PC-9 (cell line): ENCODE measurements at regions of chr10 and their contacts with region 1.

Region 1: DNA sequence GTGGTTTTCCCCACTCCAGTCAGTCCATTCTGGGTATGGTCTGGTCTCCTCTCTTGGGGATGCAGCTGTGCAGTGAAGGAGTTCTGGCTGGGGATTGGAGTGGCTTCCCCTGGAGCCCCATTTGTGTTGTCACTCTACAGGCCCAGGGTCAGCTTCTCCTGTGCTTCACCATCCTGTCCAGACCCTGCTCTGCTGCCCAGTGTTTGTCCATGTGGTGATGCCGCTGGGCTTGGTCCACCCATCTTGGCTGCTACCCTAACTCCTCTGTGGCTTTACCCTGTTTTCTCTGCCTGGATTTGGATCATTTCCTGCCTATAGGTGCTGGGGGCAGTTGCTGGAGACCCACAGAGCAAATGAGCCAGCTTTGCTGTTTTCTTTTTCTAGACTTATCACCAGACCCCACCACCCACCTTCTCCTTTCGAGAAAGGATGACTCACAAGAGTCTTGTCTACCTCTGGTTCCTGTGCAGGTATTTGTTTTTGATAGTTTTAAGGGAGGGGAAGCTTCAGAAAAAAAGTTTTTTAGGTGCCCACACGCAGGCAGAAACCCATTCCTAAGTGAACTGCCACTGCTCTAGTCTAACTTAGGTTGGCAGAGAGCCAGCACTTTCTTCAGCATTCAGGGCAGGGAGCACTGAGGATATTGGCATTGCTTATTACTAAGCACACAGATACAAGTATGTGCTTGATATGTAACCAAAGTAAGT is 8.5 kb downstream of the ZDHHC16 start:
- DNase-seq: no peak
- H3K4me3 ChIP-seq: no peak overlapping the region
- H3K27ac ChIP-seq: no peak overlapping the region
- H3K4me1 ChIP-seq: no peaks in the 10 kb centered on the region
- H3K27me3 ChIP-seq: no peaks in the 10 kb centered on the region
- CTCF ChIP-seq: no peak

Region 2: DNA sequence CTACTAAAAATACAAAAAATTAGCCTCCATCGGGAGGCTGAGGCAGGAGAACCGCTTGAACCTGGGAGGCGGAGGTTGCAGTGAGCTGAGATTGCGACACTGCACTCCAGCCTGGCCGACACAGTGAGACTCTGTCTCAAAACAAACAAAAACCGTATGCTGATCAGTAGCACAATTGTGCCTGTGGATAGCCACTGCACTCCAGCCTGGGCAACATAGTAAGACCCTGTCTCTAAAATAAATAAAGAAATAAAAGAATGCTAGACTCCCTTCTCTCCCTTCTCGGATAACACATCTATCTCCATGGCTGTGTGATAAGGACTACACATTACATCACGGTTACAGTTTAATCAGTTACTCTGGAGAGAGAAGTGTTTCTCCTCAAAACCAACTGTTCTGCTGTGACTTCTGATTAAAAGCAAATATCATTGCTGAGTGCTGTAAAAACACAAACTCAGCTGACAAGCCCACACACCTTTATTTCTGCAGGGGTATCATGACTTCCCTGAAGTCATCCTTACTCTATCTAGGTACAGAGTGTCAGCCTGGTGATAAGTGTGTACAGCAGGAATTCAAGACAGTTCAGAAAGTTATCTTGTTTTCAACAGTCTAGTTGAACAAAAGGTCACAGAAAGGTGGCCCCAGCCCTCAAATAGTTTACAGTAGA is 156.8 kb before region 1 on chr10:
- CTCF ChIA-PET with region 1: no interaction called
- POLR2A ChIA-PET with region 1: no interaction called
- intact Hi-C with region 1: no loop called
- DNase-seq: no peak
- H3K4me3 ChIP-seq: no peak overlapping the region
- H3K27ac ChIP-seq: no peak overlapping the region
- H3K4me1 ChIP-seq: no peaks in the 10 kb centered on the region
- H3K27me3 ChIP-seq: no peaks in the 10 kb centered on the region
- CTCF ChIP-seq: no peak

Region 3: DNA sequence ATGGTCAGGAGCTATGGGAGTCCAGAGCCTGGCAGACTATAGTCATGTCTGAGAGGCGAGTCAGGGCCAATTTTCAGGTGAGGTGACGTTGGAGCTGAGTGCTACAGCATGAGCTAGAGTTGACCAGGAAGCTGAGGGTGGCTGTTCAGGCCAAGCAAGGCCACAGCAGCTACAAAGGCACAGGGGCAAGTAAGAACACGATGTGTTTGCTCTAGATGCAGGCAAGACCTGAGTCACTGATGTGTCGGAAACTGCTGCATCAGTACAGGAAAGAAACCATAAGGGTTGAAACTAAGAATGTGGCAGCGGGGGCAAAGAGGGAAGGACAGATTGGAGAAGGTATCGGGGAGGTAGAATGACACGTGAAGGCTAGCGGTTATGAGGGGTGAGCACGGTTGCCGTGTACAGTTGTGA is 41.6 kb before region 1 on chr10:
- CTCF ChIA-PET with region 1: no interaction called
- POLR2A ChIA-PET with region 1: interaction called, 10 read pairs
- intact Hi-C with region 1: loop called (anchors 5 kb)
- DNase-seq: peak; percentile 47 to 81
- H3K4me3 ChIP-seq: no peak overlapping the region
- H3K27ac ChIP-seq: peak overlapping the region; percentile 50
- H3K4me1 ChIP-seq: peaks cover 10% of the 10 kb centered on the region
- H3K27me3 ChIP-seq: no peaks in the 10 kb centered on the region
- CTCF ChIP-seq: no peak

Region 4: GRCh38 chr10:97434055-97434454 is 20.4 kb before region 1 on chr10:
- CTCF ChIA-PET with region 1: no interaction called
- POLR2A ChIA-PET with region 1: interaction called, 13 read pairs
- intact Hi-C with region 1: no loop called
- DNase-seq: no peak
- H3K4me3 ChIP-seq: no peak overlapping the region
- H3K27ac ChIP-seq: no peak overlapping the region
- H3K4me1 ChIP-seq: no peaks in the 10 kb centered on the region
- H3K27me3 ChIP-seq: no peaks in the 10 kb centered on the region
- CTCF ChIP-seq: no peak

Region 5: GRCh38 chr10:97532935-97533671 is 78.6 kb after region 1 on chr10:
- CTCF ChIA-PET with region 1: no interaction called
- POLR2A ChIA-PET with region 1: no interaction called
- intact Hi-C with region 1: no loop called
- DNase-seq: no peak
- H3K4me3 ChIP-seq: no peak overlapping the region
- H3K27ac ChIP-seq: no peak overlapping the region
- H3K4me1 ChIP-seq: no peaks in the 10 kb centered on the region
- H3K27me3 ChIP-seq: no peaks in the 10 kb centered on the region
- CTCF ChIP-seq: no peak